Heart left ventricle (tissue), 16 donors: ENCODE measurements at regions of chr12 and their contacts with region 1.

Region 1: GRCh38 chr12:1605129-1606020 is 11.0 kb upstream of the FBXL14 start:
- DNase-seq: peak; percentile 74 to 83 (median 79)
- ATAC-seq: peak; percentile 77 to 87 (median 84)
- H3K4me3 ChIP-seq: peak overlapping the region in 11 of 12 donors; percentile 24 to 70 (median 54)
- H3K27ac ChIP-seq: peak overlapping the region; percentile 82 to 97 (median 92)
- H3K4me1 ChIP-seq: peaks cover 0 to 52% (median 13%) of the 10 kb centered on the region in 12 donors
- H3K27me3 ChIP-seq: no peaks in the 10 kb centered on the region
- CTCF ChIP-seq: peak; percentile 65 to 92 (median 78)
- POLR2A ChIP-seq: peak in 1 of 2 donors; percentile 48

Region 2: DNA sequence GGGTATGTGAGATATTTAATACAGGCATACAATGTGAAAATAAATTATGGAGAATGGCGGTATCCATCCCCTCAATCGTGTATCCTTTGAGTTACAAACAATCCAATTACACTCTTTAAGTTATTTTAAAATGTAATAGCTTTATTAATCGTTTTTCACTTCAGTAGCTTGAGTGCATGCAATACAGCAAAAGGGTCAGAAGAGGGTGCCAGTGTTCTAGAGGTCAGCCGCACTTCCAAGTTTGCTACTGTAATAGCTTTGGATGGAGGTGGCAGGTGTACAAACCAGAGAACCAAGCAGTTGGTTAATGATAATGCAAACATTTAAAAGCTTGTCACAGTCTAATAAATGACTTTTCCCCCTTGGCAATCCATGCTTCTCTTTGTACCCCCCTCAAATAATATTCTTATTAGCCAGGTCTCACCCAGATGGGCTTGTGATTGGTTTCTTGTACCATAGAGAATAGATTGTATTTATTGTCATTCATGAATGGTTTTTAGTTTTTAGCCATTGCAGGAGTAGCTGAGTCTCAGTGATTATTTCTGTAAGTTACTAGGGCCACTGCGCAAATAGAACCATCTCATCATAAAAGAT is 487.3 kb before region 1 on chr12:
- intact Hi-C with region 1: loop called in 3 of 10 experiments (anchors 5 kb)
- DNase-seq: peak; percentile 46 to 62 (median 55)
- ATAC-seq: peak in 3 of 4 donors; percentile 61 to 73 (median 65)
- H3K4me3 ChIP-seq: no peak overlapping the region
- H3K27ac ChIP-seq: no peak overlapping the region
- H3K4me1 ChIP-seq: no peaks in the 10 kb centered on the region
- H3K27me3 ChIP-seq: no peaks in the 10 kb centered on the region
- CTCF ChIP-seq: peak; percentile 89 to 97 (median 94)
- POLR2A ChIP-seq: no peak